IMR-90 (cell line): ENCODE measurements at regions of chr4 and their contacts with region 1.

Region 1: DNA sequence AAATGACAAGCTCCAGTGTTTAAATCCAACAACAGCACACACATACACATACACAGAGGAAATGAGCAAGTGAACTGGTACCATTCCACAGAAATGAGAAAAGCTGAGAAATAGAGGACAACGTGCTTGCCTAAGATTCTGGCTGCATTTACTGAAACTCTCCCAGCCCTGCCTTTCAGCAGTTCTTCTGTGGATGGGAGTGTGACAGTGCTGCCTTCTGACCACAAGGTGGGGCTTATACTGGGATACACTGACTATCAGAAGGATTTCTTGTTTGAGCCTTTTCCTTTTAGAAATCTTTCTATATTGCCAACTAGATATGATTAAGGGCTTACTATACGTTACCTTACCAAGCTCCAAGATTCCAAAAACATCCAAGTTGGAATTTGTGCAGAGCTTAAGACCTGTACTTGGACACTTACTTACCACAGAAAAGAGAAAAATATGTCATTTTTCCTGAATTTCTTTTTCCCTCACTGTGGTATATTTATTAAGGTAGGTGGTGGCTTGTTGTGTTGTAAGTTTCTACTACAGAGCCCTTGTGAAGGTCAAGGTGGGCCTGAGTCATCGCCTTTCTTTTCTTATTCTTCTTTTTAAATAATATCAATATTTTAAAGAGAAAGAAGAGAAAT is 10.7 kb upstream of the CXCL8 start:
- DNase-seq: peak; percentile 92
- ATAC-seq: peak; percentile 93
- H3K4me3 ChIP-seq: no peak overlapping the region
- H3K27ac ChIP-seq: no peak overlapping the region
- H3K4me1 ChIP-seq: peaks cover 10% of the 10 kb centered on the region
- H3K27me3 ChIP-seq: no peaks in the 10 kb centered on the region
- CTCF ChIP-seq: peak; percentile 84
- POLR2A ChIP-seq: no peak
- RAD21 ChIP-seq: peak; percentile 73

Region 2: GRCh38 chr4:73662709-73663546 is 66.7 kb before region 1 on chr4:
- CTCF ChIA-PET with region 1: no interaction called
- POLR2A ChIA-PET with region 1: no interaction called
- dilution Hi-C with region 1: no loop called
- in situ Hi-C with region 1: no loop called
- intact Hi-C with region 1: loop called (anchors 1 kb)
- DNase-seq: peak; percentile 77
- ATAC-seq: peak; percentile 64
- H3K4me3 ChIP-seq: no peak overlapping the region
- H3K27ac ChIP-seq: no peak overlapping the region; the same call in 1 of the 2 replicates
- H3K4me1 ChIP-seq: peaks cover 6% of the 10 kb centered on the region
- H3K27me3 ChIP-seq: no peaks in the 10 kb centered on the region
- CTCF ChIP-seq: peak; percentile 72
- POLR2A ChIP-seq: no peak
- RAD21 ChIP-seq: peak; percentile 87

Region 3: DNA sequence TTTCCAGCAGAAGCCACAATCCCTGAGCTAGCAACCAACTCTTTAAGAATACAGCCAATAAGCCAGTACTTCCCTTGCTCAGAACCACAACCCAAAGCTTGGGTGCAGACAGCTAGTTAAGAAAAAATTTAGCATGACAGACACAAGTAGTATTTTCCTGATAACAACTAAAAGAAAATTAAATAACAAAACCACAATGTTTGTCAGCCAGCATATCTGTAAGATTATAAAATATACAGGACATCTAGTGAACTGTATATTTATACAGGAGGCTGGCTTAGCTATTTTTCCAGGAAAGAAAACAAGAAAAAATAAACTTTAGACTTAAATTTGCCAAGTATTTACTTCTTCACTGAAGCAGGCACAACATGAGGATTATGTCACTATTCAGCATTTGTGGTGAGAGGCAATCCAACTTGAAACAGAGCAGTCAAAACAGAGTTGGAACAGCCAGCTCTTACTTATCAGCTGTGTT is 130.0 kb after region 1 on chr4:
- CTCF ChIA-PET with region 1: interaction called, 3 read pairs
- POLR2A ChIA-PET with region 1: no interaction called
- dilution Hi-C with region 1: no loop called
- in situ Hi-C with region 1: no loop called
- intact Hi-C with region 1: loop called (anchors 5 kb)
- DNase-seq: peak; percentile 88
- ATAC-seq: peak; percentile 91
- H3K4me3 ChIP-seq: no peak overlapping the region
- H3K27ac ChIP-seq: no peak overlapping the region
- H3K4me1 ChIP-seq: peaks cover 11% of the 10 kb centered on the region
- H3K27me3 ChIP-seq: peaks cover 21% of the 10 kb centered on the region
- CTCF ChIP-seq: no peak
- POLR2A ChIP-seq: no peak
- RAD21 ChIP-seq: no peak

Region 4: DNA sequence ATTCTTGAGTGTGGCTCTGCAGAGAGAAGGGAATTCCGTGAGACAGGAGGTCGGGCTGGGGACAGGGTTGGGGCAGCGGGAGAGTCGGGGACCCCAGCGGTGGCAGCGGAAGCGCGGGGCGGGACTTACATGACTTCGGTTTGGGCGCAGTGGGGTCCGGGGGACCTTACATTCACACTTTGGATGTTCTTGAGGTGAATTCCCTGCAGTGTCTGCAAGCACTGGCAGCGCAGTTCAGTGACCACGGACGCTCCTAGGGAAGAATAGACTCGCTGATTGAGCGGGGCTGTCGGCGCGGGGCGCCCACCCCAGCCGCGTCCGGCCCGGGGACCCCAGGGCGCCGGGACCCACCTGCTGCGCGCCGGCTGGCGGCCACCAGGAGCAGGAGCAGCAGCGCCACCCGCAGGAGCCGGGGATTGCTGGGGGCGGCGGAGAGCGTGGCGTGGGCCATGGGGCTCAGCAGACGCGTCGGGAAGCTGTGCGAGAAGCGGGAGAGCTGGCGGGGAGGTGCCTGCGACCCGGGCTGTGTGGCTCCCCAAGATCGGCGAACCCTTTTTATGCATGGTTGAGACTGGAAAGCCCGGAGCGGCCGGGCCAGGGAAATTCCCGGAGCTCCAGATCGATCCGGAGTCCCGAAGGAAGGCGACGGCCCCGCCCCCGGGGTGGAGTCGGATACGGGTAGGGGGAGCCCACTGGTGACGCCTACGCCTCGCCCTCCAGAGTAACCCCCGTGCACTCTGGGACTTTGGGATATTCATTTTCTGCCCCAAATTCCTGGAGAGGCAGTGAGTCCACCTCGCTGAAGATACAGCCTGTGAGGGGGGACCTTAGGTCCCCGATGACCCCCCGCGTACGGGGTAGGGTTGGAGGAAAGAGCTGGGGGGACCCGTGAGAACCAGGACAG is 308.8 kb after region 1 on chr4 and contains the start of gene CXCL3:
- CTCF ChIA-PET with region 1: interaction called, 4 read pairs
- POLR2A ChIA-PET with region 1: no interaction called
- dilution Hi-C with region 1: no loop called
- in situ Hi-C with region 1: no loop called
- intact Hi-C with region 1: loop called (anchors 5 kb)
- DNase-seq: peak; percentile 40
- ATAC-seq: peak; percentile 97
- H3K4me3 ChIP-seq: peak within 1 kb of the TSS; percentile 84
- H3K27ac ChIP-seq: peak within 1 kb of the TSS; percentile 53
- H3K4me1 ChIP-seq: peaks cover 2% of the 10 kb centered on the region; the same call in 1 of the 2 replicates
- H3K27me3 ChIP-seq: no peaks in the 10 kb centered on the region
- CTCF ChIP-seq: peak; percentile 48
- POLR2A ChIP-seq: 0 out of 2 replicates have a peak, but pooled peaks have one; percentile 20
- RAD21 ChIP-seq: peak; percentile 31
- total RNA-seq, gene CXCL3: 0.18 TPM in 1 of 2 replicates, not detected in the other